ENCODE measurements at regions of chr11 and their contacts with region 1.

Region 1: DNA sequence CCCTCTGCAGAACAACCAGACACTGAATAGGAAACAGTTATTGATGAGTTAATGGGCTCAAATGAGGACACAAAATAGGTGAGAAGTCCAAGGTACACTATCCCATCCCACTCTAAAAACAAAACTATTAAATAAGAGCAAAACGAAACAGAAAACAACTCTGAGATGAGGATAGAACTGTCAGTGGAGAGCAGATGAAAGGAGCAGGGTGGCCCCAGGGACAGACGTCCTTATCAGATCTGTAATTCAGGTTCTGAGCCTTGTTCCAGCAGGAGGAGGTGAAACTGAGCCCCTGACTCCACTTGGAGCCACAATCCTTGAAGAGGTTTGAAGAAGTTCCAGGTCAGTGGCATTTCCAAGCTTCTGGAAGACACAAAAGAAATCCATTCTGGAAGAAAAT is 8.5 kb upstream of the SNX19 start:
- DNase-seq: no peak
- H3K4me3 ChIP-seq: no peak overlapping the region
- H3K27ac ChIP-seq: no peak overlapping the region
- H3K4me1 ChIP-seq: no peaks in the 10 kb centered on the region
- H3K27me3 ChIP-seq: peaks cover 0 to 5% (median 0%) of the 10 kb centered on the region in 4 donors
- CTCF ChIP-seq: no peak
- POLR2A ChIP-seq: no peak

Region 2: GRCh38 chr11:130671801-130672700 is 252.7 kb before region 1 on chr11:
- intact Hi-C with region 1: no loop called
- DNase-seq: no peak
- H3K4me3 ChIP-seq: no peak overlapping the region
- H3K27ac ChIP-seq: peak overlapping the region in 3 of 4 donors; percentile 36 to 72 (median 64)
- H3K4me1 ChIP-seq: peaks cover 0 to 34% (median 7%) of the 10 kb centered on the region in 3 donors
- H3K27me3 ChIP-seq: no peaks in the 10 kb centered on the region
- CTCF ChIP-seq: no peak
- POLR2A ChIP-seq: no peak

Region 3: DNA sequence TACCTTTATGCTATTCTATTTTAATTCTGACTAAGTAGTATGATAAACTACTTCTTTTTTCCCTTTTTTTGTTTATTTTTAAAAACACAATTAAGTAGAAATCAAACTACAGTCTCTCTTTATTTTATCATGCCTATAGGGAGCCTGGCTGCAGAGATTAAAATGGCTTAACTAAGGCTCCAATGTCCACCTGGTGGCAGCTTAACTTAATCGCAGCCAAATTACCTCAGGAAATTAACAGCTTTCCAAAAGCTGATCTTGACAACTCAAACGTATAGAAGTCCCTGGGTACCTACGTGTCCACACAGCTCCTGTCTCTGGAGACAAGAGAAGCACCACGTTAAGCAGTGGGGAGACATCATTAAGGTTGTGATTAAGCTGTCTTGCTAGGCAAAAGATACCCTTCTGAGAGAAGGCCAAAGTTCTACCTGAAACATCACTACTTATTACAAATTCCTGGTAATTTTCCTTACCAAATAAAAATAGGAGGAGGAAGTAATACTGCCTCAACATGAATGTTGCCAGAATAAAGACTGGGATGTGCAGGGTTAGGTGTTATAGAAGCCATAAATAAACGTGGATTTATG is 54.7 kb after region 1 on chr11:
- intact Hi-C with region 1: loop called (anchors 10 kb)
- DNase-seq: no peak
- H3K4me3 ChIP-seq: no peak overlapping the region
- H3K27ac ChIP-seq: no peak overlapping the region
- H3K4me1 ChIP-seq: no peaks in the 10 kb centered on the region
- H3K27me3 ChIP-seq: peaks cover 0 to 13% (median 0%) of the 10 kb centered on the region in 4 donors
- CTCF ChIP-seq: peak in 4 of 6 experiments; percentile 26 to 57 (median 42)
- POLR2A ChIP-seq: no peak

Region 4: GRCh38 chr11:131674051-131674755 is 749.4 kb after region 1 on chr11:
- intact Hi-C with region 1: loop called (anchors 10 kb)
- DNase-seq: no peak
- H3K4me3 ChIP-seq: no peak overlapping the region
- H3K27ac ChIP-seq: no peak overlapping the region
- H3K4me1 ChIP-seq: peaks cover 0 to 10% (median 0%) of the 10 kb centered on the region in 3 donors
- H3K27me3 ChIP-seq: no peaks in the 10 kb centered on the region
- CTCF ChIP-seq: peak; percentile 40 to 90 (median 84)
- POLR2A ChIP-seq: no peak

Measured in esophagus squamous epithelium (tissue), 5 donors.